Caco-2 (cell line): ENCODE measurements at regions of chr9 and their contacts with region 1.

Region 1: GRCh38 chr9:112029921-112030444 is 133.4 kb downstream of the UGCG start:
- DNase-seq: peak; percentile 74 to 83
- H3K4me3 ChIP-seq: no peak overlapping the region
- H3K4me3 Mint-ChIP-seq: peak overlapping the region; percentile 15
- H3K27ac Mint-ChIP-seq: peak overlapping the region; percentile 64
- H3K4me1 ChIP-seq: peaks cover 21% of the 10 kb centered on the region
- H3K4me1 Mint-ChIP-seq: peaks cover 35% of the 10 kb centered on the region
- H3K27me3 ChIP-seq: no peaks in the 10 kb centered on the region
- H3K27me3 Mint-ChIP-seq: no peaks in the 10 kb centered on the region
- CTCF ChIP-seq: no peak

Region 2: DNA sequence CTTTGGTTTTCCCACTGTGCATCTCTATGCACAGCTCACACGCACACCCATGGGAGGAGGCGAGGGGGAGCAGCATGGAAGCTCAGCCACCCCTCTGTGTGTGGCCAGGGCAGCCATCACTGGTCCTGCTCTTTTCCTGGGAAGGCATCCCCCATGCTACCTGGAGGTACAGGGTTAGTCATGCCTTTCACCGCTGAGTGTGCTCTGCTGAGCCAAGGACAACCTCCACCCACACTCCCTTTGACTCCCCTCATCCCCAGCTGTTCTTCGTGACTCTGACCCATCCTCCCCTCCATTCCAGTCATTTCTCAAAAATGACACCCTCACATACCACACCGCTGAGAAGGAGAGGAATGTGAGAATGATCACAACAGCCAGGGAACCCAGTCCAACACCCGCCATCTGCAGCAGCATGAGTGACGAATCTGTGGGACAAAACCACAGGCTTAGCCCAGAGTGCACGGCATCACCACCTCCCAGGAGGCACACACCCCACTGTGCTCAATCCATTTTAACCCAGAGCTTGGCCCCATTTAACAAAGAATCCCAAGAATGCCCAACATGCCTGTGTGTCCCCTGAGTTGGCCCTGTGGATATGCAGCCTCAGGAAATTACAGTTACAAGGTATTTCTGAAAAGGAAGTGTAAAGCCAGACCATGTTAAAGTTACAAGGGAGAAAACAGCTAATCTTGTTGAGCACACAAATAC is 11.7 kb after region 1 on chr9:
- CTCF ChIA-PET with region 1: no interaction called
- POLR2A ChIA-PET with region 1: no interaction called
- intact Hi-C with region 1: loop called (anchors 1 kb)
- DNase-seq: peak; percentile 60 to 82
- H3K4me3 ChIP-seq: no peak overlapping the region
- H3K4me3 Mint-ChIP-seq: peak overlapping the region; percentile 39
- H3K27ac Mint-ChIP-seq: peak overlapping the region; percentile 88
- H3K4me1 ChIP-seq: peaks cover 44% of the 10 kb centered on the region
- H3K4me1 Mint-ChIP-seq: peaks cover 17% of the 10 kb centered on the region
- H3K27me3 ChIP-seq: no peaks in the 10 kb centered on the region
- H3K27me3 Mint-ChIP-seq: no peaks in the 10 kb centered on the region
- CTCF ChIP-seq: no peak

Region 3: DNA sequence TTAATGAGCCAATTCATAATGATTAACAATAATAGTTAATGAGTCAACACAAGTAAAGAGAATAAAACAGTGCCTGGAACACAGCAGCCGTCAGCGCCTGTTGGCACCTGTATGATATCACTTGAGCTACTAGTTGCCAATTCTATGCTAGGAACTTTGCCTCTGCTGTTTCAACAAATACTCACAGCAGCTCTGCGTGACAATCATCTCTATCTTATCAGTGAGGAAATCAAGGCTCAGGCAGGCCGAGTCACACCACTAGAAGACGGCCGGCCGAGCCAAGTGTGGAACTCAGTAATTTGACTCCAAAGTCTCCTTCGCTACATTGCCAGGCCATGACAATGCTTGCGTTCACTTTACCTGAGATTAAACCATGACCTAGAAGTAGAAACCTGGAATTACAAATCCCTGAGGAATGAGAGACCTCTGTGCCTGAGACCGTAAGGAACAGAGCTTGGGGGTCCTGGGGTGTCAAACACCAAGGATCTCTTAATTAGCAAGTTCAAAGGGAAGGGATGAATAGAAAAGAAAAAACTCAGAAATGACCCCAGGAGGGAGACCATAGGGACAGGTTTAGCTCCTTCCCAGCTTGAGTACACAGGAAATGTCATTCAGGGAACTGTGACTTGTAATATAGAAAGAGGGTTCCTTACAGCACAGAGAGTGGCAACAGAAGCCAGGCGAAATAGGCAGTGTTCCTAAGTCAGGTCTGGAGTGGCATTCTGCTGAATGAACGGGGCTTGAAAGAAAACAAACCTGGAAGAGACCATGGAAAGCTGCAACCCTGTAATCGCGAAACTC is 36.0 kb after region 1 on chr9:
- CTCF ChIA-PET with region 1: interaction called, 4 read pairs
- POLR2A ChIA-PET with region 1: interaction called, 8 read pairs
- intact Hi-C with region 1: loop called (anchors 1 kb)
- DNase-seq: peak; percentile 82 to 92
- H3K4me3 ChIP-seq: no peak overlapping the region
- H3K4me3 Mint-ChIP-seq: peak overlapping the region; percentile 52
- H3K27ac Mint-ChIP-seq: peak overlapping the region; percentile 96
- H3K4me1 ChIP-seq: peaks cover 65% of the 10 kb centered on the region
- H3K4me1 Mint-ChIP-seq: peaks cover 46% of the 10 kb centered on the region
- H3K27me3 ChIP-seq: no peaks in the 10 kb centered on the region
- H3K27me3 Mint-ChIP-seq: no peaks in the 10 kb centered on the region
- CTCF ChIP-seq: no peak